MCF 10A (cell line): ENCODE measurements at regions of chr6 and their contacts with region 1.

Region 1: GRCh38 chr6:143397229-143398222 is 53.0 kb downstream of the ADAT2 start:
- DNase-seq: peak; percentile 99
- H3K4me3 Mint-ChIP-seq: peak overlapping the region; percentile 24
- H3K27ac Mint-ChIP-seq: peak overlapping the region; percentile 100
- H3K4me1 Mint-ChIP-seq: peaks cover 73% of the 10 kb centered on the region
- H3K27me3 Mint-ChIP-seq: no peaks in the 10 kb centered on the region
- CTCF ChIP-seq: no peak

Region 2: GRCh38 chr6:143232849-143233248 is 164.7 kb before region 1 on chr6:
- CTCF ChIA-PET with region 1: interaction called, 10 read pairs
- POLR2A ChIA-PET with region 1: interaction called, 3 read pairs
- intact Hi-C with region 1: no loop called
- DNase-seq: peak; percentile 70
- H3K4me3 Mint-ChIP-seq: no peak overlapping the region
- H3K27ac Mint-ChIP-seq: peak overlapping the region; percentile 33
- H3K4me1 Mint-ChIP-seq: peaks cover 7% of the 10 kb centered on the region
- H3K27me3 Mint-ChIP-seq: no peaks in the 10 kb centered on the region
- CTCF ChIP-seq: peak; percentile 55

Region 3: GRCh38 chr6:143346004-143346403 is 51.5 kb before region 1 on chr6:
- CTCF ChIA-PET with region 1: no interaction called
- POLR2A ChIA-PET with region 1: interaction called, 402 read pairs
- intact Hi-C with region 1: no loop called
- DNase-seq: no peak
- H3K4me3 Mint-ChIP-seq: no peak overlapping the region
- H3K27ac Mint-ChIP-seq: no peak overlapping the region
- H3K4me1 Mint-ChIP-seq: peaks cover 15% of the 10 kb centered on the region
- H3K27me3 Mint-ChIP-seq: no peaks in the 10 kb centered on the region
- CTCF ChIP-seq: no peak

Region 4: GRCh38 chr6:143427109-143427817 is 29.7 kb after region 1 on chr6:
- CTCF ChIA-PET with region 1: interaction called, 11 read pairs
- POLR2A ChIA-PET with region 1: interaction called, 19 read pairs
- intact Hi-C with region 1: no loop called
- DNase-seq: peak; percentile 78
- H3K4me3 Mint-ChIP-seq: no peak overlapping the region
- H3K27ac Mint-ChIP-seq: peak overlapping the region; percentile 84
- H3K4me1 Mint-ChIP-seq: peaks cover 11% of the 10 kb centered on the region
- H3K27me3 Mint-ChIP-seq: no peaks in the 10 kb centered on the region
- CTCF ChIP-seq: peak; percentile 98